ENCODE measurements at regions of chr9 and their contacts with region 1.

Region 1: DNA sequence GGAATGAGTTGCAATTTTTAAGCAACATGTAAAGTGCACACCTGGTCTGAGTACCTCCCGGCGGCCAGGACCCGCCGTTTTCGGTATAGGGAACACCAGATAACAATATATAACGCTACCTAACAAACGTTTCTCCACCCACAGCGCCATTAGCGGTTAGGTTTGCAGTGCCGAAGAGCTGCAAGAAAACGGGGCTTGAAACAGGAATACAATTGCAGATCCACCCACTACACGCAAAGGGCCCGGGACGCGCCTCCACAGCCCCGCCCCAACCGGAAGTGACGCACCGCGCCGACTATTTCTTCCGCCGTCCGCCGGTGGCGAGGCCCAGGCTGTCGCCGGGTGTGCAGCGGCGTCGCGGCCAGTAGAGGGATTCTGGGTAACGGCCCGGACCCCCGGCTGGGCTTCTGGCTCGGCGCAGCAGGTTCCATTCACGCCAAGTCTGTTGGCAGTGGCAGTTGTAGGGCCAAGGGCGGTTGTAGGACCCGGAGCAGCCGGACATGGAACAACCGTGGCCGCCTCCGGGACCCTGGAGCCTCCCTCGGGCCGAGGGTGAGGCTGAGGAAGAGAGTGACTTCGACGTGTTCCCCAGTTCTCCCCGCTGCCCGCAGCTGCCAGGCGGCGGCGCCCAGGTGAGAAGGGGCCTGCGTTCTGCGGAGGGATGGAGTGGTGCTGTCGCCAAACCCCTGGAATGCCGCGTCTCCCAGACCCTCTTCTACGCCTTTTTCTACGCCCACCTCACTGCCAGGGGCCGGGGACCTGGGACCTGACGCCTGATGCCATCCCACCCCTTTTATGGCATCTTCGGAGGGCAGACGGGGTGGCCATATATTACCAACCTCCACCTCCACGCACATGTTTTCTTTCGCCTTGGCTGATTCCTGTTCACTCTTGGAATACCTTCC is at the start of gene CDC37L1:
- DNase-seq: peak; percentile 94
- H3K4me3 ChIP-seq: peak within 1 kb of the TSS; percentile 76 to 83 (median 82)
- H3K27ac ChIP-seq: peak within 1 kb of the TSS; percentile 87
- H3K4me1 ChIP-seq: peaks cover 10% of the 10 kb centered on the region
- H3K27me3 ChIP-seq: no peaks in the 10 kb centered on the region
- CTCF ChIP-seq: peak; percentile 32 to 65
- total RNA-seq, gene CDC37L1: 19.0 to 20.2 TPM

Region 2: GRCh38 chr9:4654084-4654483 is 25.4 kb before region 1 on chr9:
- CTCF ChIA-PET with region 1: interaction called, 16 read pairs
- dilution Hi-C with region 1: no loop called
- in situ Hi-C with region 1: no loop called
- intact Hi-C with region 1: no loop called
- DNase-seq: no peak
- H3K4me3 ChIP-seq: no peak overlapping the region
- H3K27ac ChIP-seq: no peak overlapping the region
- H3K4me1 ChIP-seq: no peaks in the 10 kb centered on the region
- H3K27me3 ChIP-seq: no peaks in the 10 kb centered on the region
- CTCF ChIP-seq: no peak

Region 3: DNA sequence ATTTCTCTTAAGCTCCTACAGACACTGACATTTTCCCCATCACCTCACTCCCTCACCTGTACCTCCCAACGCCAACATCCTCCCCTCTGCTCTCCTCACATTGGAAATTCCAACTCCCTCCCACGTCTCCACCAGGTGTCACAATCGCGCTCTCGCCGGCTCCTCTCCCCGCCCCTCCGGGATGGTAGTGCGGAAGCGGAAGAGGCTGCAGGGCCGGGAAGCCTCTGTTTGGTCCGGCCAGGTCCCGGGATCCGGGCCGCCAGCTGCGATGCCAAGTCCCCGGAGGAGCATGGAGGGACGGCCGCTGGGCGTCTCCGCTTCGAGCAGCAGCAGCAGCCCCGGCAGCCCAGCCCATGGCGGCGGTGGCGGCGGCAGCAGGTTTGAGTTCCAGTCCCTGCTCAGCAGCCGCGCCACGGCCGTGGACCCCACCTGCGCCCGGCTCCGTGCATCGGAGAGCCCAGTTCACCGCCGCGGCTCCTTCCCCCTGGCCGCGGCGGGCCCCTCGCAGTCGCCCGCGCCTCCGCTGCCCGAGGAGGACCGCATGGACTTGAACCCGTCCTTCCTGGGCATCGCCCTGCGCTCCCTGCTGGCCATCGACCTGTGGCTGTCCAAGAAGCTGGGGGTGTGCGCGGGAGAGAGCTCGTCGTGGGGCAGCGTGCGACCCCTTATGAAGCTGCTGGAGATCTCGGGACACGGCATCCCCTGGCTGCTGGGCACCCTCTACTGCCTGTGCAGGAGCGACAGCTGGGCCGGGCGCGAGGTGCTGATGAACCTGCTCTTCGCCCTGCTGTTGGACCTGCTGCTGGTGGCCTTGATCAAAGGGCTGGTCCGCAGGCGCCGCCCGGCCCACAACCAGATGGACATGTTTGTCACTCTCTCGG is 17.2 kb before region 1 on chr9 and contains the start of gene PLPP6:
- CTCF ChIA-PET with region 1: no interaction called
- dilution Hi-C with region 1: no loop called
- in situ Hi-C with region 1: no loop called
- intact Hi-C with region 1: loop called (anchors 1 kb)
- DNase-seq: peak; percentile 95
- H3K4me3 ChIP-seq: peak within 1 kb of the TSS; percentile 76 to 92 (median 87)
- H3K27ac ChIP-seq: peak within 1 kb of the TSS; percentile 60
- H3K4me1 ChIP-seq: peaks cover 49% of the 10 kb centered on the region
- H3K27me3 ChIP-seq: no peaks in the 10 kb centered on the region
- CTCF ChIP-seq: peak in 1 of 2 donors; percentile 56
- total RNA-seq, gene PLPP6: 10.9 to 12.0 TPM

Region 4: GRCh38 chr9:5110867-5111713 is 431.6 kb after region 1 on chr9:
- CTCF ChIA-PET with region 1: no interaction called
- dilution Hi-C with region 1: no loop called
- in situ Hi-C with region 1: no loop called
- intact Hi-C with region 1: no loop called
- DNase-seq: no peak
- H3K4me3 ChIP-seq: no peak overlapping the region
- H3K27ac ChIP-seq: no peak overlapping the region
- H3K4me1 ChIP-seq: no peaks in the 10 kb centered on the region
- H3K27me3 ChIP-seq: no peaks in the 10 kb centered on the region
- CTCF ChIP-seq: no peak